ENCODE measurements at regions of chr2 and their contacts with region 1.

Region 1: DNA sequence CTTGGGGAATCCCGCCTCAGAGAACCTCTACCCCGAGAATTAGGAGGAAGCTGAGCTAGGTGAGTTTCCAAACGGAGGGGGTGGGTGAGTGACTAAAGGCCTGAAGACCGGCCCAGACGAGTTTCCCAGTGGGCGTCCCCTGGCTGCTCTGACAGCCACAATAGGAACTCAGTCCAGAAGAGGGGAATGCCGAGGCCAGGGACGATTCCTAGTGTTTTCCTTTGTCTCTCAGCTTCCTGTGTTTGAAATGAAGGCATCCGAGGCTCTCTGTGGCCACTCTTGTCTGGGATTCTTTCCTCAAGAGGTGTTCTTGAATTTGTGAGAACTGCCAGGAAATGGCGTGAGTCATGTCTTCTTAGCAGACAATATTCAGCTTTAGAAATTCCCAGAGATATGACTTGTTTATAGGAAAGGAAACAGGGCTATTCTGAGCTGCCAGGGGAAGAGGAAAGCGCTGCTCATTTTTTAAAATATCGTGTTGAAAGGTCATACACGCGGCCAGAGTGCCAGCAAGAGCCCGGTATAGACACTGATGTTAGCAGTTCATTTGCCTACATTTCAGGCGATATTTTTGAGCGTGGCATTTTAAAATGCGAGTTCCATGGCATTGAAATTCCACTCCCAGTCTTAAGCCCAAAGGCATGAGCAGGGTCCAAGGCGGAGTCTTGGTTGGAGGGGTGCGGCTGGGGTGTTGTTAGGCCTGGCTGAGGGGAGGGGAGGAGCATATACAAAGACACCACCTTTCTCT is 169.1 kb upstream of the KLF7 start:
- DNase-seq: peak; percentile 68
- H3K4me3 Mint-ChIP-seq: peak overlapping the region; percentile 52
- H3K27ac Mint-ChIP-seq: peak overlapping the region; percentile 86
- H3K4me1 Mint-ChIP-seq: peaks cover 68% of the 10 kb centered on the region
- H3K27me3 Mint-ChIP-seq: no peaks in the 10 kb centered on the region

Region 2: DNA sequence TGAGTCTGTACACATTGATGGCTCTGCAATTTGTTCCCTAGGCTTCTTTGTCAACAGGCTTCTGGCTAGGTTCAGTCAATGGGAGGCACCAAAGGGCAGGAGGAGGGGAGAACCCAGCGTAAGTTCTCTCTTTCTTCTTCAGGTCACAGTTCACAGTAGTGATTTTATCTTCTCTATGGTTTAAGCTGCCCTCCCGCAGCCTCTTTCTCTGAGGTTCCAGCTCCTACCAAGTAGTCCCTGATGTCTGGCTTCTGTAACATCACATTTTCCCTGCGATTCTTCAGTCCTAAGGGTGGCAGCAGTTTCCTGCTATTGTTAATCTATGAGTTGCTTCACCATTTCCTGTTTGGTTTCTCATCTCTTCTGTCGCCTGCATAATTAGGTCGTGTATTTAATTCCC is 288.1 kb before region 1 on chr2:
- intact Hi-C with region 1: loop called (anchors 5 kb)
- DNase-seq: peak; percentile 80
- H3K4me3 Mint-ChIP-seq: peak overlapping the region; percentile 28
- H3K27ac Mint-ChIP-seq: peak overlapping the region; percentile 31
- H3K4me1 Mint-ChIP-seq: peaks cover 12% of the 10 kb centered on the region
- H3K27me3 Mint-ChIP-seq: peaks cover 6% of the 10 kb centered on the region

Region 3: DNA sequence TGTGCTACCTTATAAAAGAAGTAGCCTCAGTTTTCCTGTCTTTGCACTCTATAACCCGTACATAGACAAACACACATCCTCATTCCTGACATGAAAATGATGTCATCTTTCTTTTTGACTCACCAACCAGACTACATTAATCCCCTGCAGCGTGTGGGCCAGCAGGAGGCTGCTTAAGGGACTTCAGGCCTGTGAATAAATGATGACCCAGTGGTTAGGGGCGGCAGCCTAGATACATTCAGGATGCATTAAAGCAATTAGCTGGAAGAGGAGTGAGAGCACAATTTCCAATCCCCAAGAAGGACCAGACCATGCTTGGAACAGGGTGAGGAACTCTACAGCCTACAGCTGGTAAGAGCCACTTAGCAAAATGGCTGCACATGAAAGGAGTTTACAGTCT is 111.7 kb before region 1 on chr2:
- intact Hi-C with region 1: loop called (anchors 1 kb)
- DNase-seq: peak; percentile 59
- H3K4me3 Mint-ChIP-seq: no peak overlapping the region
- H3K27ac Mint-ChIP-seq: peak overlapping the region; percentile 59
- H3K4me1 Mint-ChIP-seq: peaks cover 35% of the 10 kb centered on the region
- H3K27me3 Mint-ChIP-seq: peaks cover 6% of the 10 kb centered on the region

Region 4: GRCh38 chr2:207283356-207283755 is 51.4 kb before region 1 on chr2:
- intact Hi-C with region 1: loop called (anchors 1 kb)
- DNase-seq: peak; percentile 64
- H3K4me3 Mint-ChIP-seq: peak overlapping the region; percentile 51
- H3K27ac Mint-ChIP-seq: peak overlapping the region; percentile 84
- H3K4me1 Mint-ChIP-seq: peaks cover 46% of the 10 kb centered on the region
- H3K27me3 Mint-ChIP-seq: no peaks in the 10 kb centered on the region

Region 5: GRCh38 chr2:207311316-207312005 is 23.3 kb before region 1 on chr2:
- intact Hi-C with region 1: loop called (anchors 1 kb)
- DNase-seq: peak; percentile 74
- H3K4me3 Mint-ChIP-seq: peak overlapping the region; percentile 28
- H3K27ac Mint-ChIP-seq: peak overlapping the region; percentile 64
- H3K4me1 Mint-ChIP-seq: peaks cover 36% of the 10 kb centered on the region
- H3K27me3 Mint-ChIP-seq: no peaks in the 10 kb centered on the region

Measured in activated CD4-positive, alpha-beta T cell treated with anti-CD3 and anti-CD28 coated beads, Interleukin-2, amount 10 ng/mL, durations not matched to agents 24 days and 14 days (primary cell).